ENCODE measurements at regions of chr17 and their contacts with region 1.

Region 1: GRCh38 chr17:44919885-44920564 is 4.7 kb upstream of the GFAP start:
- DNase-seq: peak; percentile 74
- H3K4me3 ChIP-seq: no peak overlapping the region
- H3K27ac ChIP-seq: no peak overlapping the region
- H3K4me1 ChIP-seq: no peaks in the 10 kb centered on the region
- H3K27me3 ChIP-seq: no peaks in the 10 kb centered on the region
- CTCF ChIP-seq: peak; percentile 78

Region 2: GRCh38 chr17:44844390-44844830 is 75.6 kb before region 1 on chr17:
- intact Hi-C with region 1: no loop called
- DNase-seq: no peak
- H3K4me3 ChIP-seq: no peak overlapping the region
- H3K27ac ChIP-seq: no peak overlapping the region
- H3K4me1 ChIP-seq: no peaks in the 10 kb centered on the region
- H3K27me3 ChIP-seq: no peaks in the 10 kb centered on the region
- CTCF ChIP-seq: no peak

Region 3: GRCh38 chr17:45021607-45022287 is 101.7 kb after region 1 on chr17:
- intact Hi-C with region 1: loop called (anchors 2 kb)
- DNase-seq: peak; percentile 54
- H3K4me3 ChIP-seq: peak overlapping the region; percentile 38
- H3K27ac ChIP-seq: peak overlapping the region; percentile 35
- H3K4me1 ChIP-seq: peaks cover 3% of the 10 kb centered on the region
- H3K27me3 ChIP-seq: no peaks in the 10 kb centered on the region
- CTCF ChIP-seq: peak; percentile 92

Region 4: DNA sequence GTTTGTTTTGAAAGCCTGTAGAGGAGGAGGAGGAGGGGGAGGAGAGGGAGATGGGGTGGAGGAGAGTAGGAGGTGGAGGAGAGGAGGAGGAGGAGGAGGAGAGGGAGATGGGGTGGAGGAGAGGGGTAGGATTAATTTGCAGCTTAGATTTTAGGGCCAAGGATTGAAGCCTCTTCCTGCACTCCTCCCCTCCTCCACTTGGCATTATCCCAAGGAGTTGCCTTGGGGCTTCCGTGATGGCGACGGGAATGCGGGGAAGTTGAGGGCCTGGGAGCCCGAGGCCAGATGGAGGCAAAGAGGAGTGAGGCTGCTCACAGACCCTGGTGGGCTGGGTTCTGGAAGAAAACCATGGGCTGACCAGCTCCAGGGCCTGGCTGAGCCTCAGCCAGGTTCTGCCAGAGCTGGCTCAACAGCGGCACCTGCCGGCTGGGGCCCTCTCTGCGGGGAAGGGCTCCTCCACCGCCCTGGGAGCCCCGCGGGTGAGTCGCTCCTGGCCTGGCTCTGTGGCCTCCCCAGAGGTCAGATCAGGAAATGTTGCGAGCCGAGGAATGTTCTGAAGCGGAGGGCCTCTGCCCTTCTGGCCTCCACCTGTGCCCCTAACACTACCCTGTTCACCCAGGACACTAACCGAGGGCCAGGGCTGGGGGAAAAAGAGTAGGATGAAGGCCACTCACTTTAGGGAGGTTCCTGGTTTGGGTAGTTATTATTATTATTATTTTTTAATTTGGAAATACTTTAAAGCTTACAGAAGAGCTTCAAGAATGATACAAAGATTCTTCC is 277.7 kb after region 1 on chr17:
- intact Hi-C with region 1: loop called (anchors 5 kb)
- DNase-seq: peak; percentile 95
- H3K4me3 ChIP-seq: no peak overlapping the region
- H3K27ac ChIP-seq: no peak overlapping the region
- H3K4me1 ChIP-seq: no peaks in the 10 kb centered on the region
- H3K27me3 ChIP-seq: no peaks in the 10 kb centered on the region
- CTCF ChIP-seq: peak; percentile 99

Measured in colonic mucosa (tissue), 4 donors.